Activated CD4-positive, alpha-beta memory T cell treated with anti-CD3 and anti-CD28 coated beads for 36 hours (primary cell): ENCODE measurements at regions of chr6 and their contacts with region 1.

Region 1: GRCh38 chr6:118651282-118652050 is at the start of gene CEP85L:
- DNase-seq: peak; percentile 93
- H3K4me3 Mint-ChIP-seq: peak within 1 kb of the TSS; percentile 87
- H3K27ac Mint-ChIP-seq: peak within 1 kb of the TSS; percentile 93
- H3K4me1 Mint-ChIP-seq: peaks cover 53% of the 10 kb centered on the region
- H3K27me3 Mint-ChIP-seq: no peaks in the 10 kb centered on the region
- total RNA-seq, gene CEP85L: 21.1 to 23.3 TPM

Region 2: DNA sequence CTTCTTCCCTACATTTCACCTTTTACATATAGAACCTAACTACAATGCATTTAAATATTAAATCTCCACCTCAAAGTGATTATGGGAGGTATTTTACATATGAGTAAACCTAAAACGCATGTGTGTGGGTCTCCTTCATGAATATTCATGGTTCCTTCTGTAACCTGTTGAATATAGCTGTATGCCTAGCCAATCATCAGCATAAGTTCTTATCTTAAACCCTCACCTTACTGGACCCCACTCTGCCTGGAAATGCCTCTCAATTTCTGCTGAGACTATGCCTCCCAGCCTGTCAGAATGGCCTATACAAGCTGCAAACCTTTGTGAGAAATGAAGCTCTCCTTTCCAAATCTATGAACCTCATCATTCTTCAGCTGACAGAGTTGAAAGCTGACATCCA is 21.4 kb before region 1 on chr6:
- CTCF ChIA-PET with region 1: interaction called, 5 read pairs
- POLR2A ChIA-PET with region 1: interaction called, 5 read pairs
- intact Hi-C with region 1: loop called (anchors 2 kb)
- DNase-seq: no peak
- H3K4me3 Mint-ChIP-seq: no peak overlapping the region
- H3K27ac Mint-ChIP-seq: no peak overlapping the region
- H3K4me1 Mint-ChIP-seq: peaks cover 53% of the 10 kb centered on the region
- H3K27me3 Mint-ChIP-seq: no peaks in the 10 kb centered on the region

Region 3: GRCh38 chr6:118685823-118686449 is 34.5 kb after region 1 on chr6:
- CTCF ChIA-PET with region 1: no interaction called
- POLR2A ChIA-PET with region 1: no interaction called
- intact Hi-C with region 1: loop called (anchors 2 kb)
- DNase-seq: no peak
- H3K4me3 Mint-ChIP-seq: no peak overlapping the region
- H3K27ac Mint-ChIP-seq: no peak overlapping the region
- H3K4me1 Mint-ChIP-seq: peaks cover 65% of the 10 kb centered on the region
- H3K27me3 Mint-ChIP-seq: no peaks in the 10 kb centered on the region

Region 4: DNA sequence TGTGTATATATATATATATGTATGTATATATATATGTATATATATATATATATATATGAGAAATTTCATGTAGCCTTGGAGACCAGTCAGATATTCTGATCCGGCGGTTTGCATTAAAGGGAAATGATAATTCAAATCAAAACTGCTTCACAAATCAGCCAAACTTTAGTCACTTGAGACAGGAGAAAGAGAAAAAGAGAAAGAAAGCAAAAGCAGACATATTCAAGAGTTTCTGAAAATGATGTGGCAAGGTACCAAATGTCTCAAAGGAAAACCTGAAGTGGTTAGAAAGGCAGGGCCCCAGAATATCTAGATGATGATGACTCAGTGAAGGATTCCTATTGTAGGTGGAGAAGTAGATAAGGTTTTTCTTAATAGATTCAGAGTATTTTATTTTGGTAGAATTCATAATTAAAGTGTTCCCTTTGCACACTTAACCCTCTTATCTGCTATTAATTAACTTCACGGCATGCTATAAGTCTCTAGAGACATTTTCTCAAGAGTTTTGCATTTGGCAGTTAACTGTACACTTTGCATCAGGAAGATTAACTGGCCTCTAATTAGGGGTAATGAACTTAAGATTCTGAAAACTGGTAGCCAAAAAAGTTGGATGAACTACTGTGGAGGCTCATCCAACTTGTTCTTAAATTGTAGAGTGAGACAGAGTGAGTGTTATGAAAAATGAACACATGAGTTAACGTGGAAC is 192.4 kb after region 1 on chr6:
- CTCF ChIA-PET with region 1: no interaction called
- POLR2A ChIA-PET with region 1: no interaction called
- intact Hi-C with region 1: loop called (anchors 1 kb)
- DNase-seq: no peak
- H3K4me3 Mint-ChIP-seq: peak overlapping the region; percentile 33
- H3K27ac Mint-ChIP-seq: peak overlapping the region; percentile 34
- H3K4me1 Mint-ChIP-seq: peaks cover 32% of the 10 kb centered on the region
- H3K27me3 Mint-ChIP-seq: no peaks in the 10 kb centered on the region